ENCODE measurements at regions of chr16 and their contacts with region 1.

Region 1: GRCh38 chr16:19254611-19255010 is 30.9 kb upstream of the CLEC19A start:
- DNase-seq: no peak
- H3K4me3 ChIP-seq: no peak overlapping the region
- CTCF ChIP-seq: no peak
- POLR2A ChIP-seq: no peak

Region 2: DNA sequence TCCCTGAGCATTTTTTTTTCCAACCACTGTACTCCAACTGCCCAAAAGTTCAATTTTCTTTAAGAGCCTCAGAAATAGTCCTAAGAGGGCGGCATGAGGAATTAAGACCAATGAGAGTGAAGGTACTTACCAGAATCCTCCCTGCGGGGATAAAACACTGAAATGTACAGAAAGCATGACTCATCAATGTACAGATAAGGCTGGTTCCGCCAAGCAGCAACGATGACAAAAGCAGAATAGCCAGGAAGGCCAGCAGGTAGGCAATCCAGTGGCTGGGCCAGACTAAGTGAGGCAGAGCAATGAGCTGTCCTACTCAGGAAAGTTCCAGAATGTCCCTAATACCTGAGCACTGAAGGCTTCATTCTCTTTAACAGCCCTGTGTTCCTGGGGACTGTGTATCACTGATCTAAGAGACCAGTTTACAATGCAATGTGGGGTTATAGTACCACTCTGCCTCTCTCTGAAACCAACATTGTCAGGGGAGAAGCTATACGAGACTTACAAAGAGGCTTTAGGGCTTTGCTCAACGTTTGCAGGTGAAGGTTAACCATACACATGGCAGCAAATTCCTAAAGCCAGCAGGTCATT is 830.1 kb after region 1 on chr16:
- intact Hi-C with region 1: loop called (anchors 5 kb)
- DNase-seq: no peak
- H3K4me3 ChIP-seq: no peak overlapping the region
- CTCF ChIP-seq: no peak
- POLR2A ChIP-seq: no peak

Measured in lower leg skin (tissue), 4 donors.